CD4-positive, alpha-beta T cell (primary cell): ENCODE measurements at regions of chr3 and their contacts with region 1.

Region 1: GRCh38 chr3:112074721-112075497 is 11.3 kb upstream of the C3orf52 start:
- DNase-seq: peak in 12 of 14 experiments; percentile 5 to 77 (median 42)
- ATAC-seq: peak; percentile 86
- H3K4me3 ChIP-seq: no peak overlapping the region
- H3K4me3 Mint-ChIP-seq: peak overlapping the region; percentile 70
- H3K27ac ChIP-seq: peak overlapping the region in 1 of 2 donors; percentile 48
- H3K27ac Mint-ChIP-seq: peak overlapping the region; percentile 94
- H3K4me1 ChIP-seq: peaks cover 21% of the 10 kb centered on the region
- H3K4me1 Mint-ChIP-seq: peaks cover 56% of the 10 kb centered on the region
- H3K27me3 ChIP-seq: no peaks in the 10 kb centered on the region
- H3K27me3 Mint-ChIP-seq: no peaks in the 10 kb centered on the region
- CTCF ChIP-seq: no peak

Region 2: DNA sequence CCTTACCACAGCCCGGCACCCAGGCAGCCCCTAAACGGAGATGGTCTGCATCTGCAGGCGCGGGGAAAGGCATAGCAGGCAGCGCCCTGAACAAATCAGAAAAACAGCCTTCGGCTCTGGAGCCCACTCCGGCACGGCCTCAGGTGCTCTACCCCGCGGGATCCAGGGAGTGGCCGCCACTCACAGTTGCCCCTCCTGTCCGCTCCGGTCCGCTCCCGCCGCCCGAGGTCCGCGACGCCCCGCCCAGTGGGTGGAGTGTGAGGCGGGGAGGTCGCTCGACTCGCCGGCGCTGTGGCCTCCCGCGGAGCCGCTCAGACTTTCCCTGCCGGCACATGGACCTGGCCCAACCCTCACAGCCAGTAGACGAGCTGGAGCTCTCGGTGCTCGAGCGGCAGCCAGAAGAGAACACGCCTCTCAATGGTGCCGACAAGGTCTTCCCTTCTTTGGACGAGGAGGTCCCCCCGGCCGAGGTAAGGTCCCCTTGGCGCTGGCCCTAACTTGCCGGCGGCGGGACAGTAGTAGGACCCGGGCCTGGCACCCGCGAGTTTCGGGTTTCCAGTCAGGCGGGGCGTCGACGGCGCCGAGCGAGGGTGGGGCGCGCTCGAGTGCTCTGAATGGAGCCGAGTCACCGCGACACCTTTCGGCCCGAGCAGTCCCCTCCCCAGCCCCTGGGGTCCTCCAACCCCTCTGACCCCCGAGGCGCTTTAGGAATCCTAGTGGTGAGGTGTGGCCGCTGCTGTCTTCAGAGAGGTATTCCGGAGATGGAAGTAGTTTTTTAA is 11.4 kb after region 1 on chr3 and contains the start of gene C3orf52:
- CTCF ChIA-PET with region 1: interaction called, 3 read pairs
- POLR2A ChIA-PET with region 1: interaction called, 7 read pairs
- intact Hi-C with region 1: loop called in 1 of 2 experiments (anchors 2 kb)
- DNase-seq: peak; percentile 14 to 77 (median 42)
- ATAC-seq: peak; percentile 77
- H3K4me3 ChIP-seq: peak within 1 kb of the TSS; percentile 71
- H3K4me3 Mint-ChIP-seq: peak within 1 kb of the TSS; percentile 85
- H3K27ac ChIP-seq: no peak within 1 kb of the TSS
- H3K27ac Mint-ChIP-seq: peak within 1 kb of the TSS; percentile 81
- H3K4me1 ChIP-seq: peaks cover 33% of the 10 kb centered on the region
- H3K4me1 Mint-ChIP-seq: peaks cover 65% of the 10 kb centered on the region
- H3K27me3 ChIP-seq: no peaks in the 10 kb centered on the region
- H3K27me3 Mint-ChIP-seq: no peaks in the 10 kb centered on the region
- CTCF ChIP-seq: no peak
- total RNA-seq, gene C3orf52: 1.6 to 2.7 TPM